CD4-positive, alpha-beta T cell (primary cell): ENCODE measurements at regions of chr6 and their contacts with region 1.

Region 1: DNA sequence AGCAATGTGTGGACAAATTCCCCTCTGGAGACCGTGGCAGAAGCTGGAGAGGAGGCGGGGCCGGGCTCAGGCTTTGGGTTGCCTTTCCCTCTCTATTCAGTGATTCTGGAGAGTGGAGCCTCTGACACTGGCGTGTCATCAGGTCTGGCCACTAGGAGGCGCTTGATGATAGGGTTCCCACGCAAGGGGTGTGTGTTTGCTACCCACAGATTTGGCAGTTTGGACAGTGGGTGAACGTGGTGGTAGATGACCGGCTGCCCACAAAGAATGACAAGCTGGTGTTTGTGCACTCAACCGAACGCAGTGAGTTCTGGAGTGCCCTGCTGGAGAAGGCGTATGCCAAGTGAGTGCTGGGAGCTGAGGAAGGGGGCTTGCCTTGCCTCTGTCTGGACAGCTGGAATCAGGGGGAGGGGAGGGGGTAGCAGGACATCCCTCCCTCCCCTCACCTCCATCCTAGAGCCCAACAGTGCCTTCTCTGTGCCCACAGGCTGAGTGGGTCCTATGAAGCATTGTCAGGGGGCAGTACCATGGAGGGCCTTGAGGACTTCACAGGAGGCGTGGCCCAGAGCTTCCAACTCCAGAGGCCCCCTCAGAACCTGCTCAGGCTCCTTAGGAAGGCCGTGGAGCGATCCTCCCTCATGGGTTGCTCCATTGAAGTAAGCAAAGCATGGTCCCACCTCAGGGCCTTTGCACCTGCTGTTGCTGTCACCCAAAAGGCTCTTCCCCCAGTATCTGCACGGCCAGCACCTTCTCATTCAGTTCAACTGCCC is 14.3 kb downstream of the CAPN11 start:
- DNase-seq: peak; percentile 62 to 84 (median 72)
- ATAC-seq: peak; percentile 89
- H3K4me3 ChIP-seq: no peak overlapping the region
- H3K4me3 Mint-ChIP-seq: peak overlapping the region; percentile 23
- H3K27ac ChIP-seq: no peak overlapping the region
- H3K27ac Mint-ChIP-seq: no peak overlapping the region
- H3K4me1 ChIP-seq: peaks cover 13% of the 10 kb centered on the region
- H3K4me1 Mint-ChIP-seq: peaks cover 18% of the 10 kb centered on the region
- H3K27me3 ChIP-seq: peaks cover 5 to 16% of the 10 kb centered on the region in 2 experiments
- H3K27me3 Mint-ChIP-seq: no peaks in the 10 kb centered on the region
- CTCF ChIP-seq: peak; percentile 90

Region 2: DNA sequence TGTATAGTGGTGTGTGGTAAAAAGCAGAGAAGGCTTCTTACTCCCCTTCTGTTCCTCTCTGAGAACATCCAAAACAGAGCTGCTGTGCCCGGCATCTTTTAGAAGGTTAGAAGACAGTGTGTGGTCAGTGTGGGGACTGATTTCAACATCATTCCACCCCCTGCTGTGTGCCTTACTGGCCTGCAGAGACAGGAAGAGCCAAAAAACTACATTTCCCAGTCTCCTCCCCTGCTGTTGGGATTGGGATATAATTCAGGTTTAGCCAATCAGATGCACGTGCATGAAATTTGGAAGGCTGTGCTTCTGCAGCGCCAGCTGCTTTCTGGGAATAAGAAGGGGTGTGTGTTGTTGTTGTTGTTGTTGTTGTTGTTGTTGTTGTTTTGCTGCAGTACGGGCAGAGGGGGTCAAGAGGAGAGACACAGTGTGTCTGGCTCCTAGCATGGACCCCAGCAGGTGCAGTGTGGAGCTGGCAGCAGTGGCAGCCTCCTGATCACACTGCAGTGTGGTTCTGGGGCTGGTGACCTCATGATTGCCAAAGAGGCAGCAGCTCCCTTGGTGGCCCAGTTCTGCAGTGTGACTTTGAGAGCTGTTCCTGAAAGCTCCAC is 120.4 kb before region 1 on chr6:
- CTCF ChIA-PET with region 1: no interaction called
- POLR2A ChIA-PET with region 1: no interaction called
- intact Hi-C with region 1: no loop called
- DNase-seq: peak in 1 of 14 experiments; percentile 31
- ATAC-seq: no peak
- H3K4me3 ChIP-seq: no peak overlapping the region
- H3K4me3 Mint-ChIP-seq: no peak overlapping the region
- H3K27ac ChIP-seq: no peak overlapping the region
- H3K27ac Mint-ChIP-seq: no peak overlapping the region
- H3K4me1 ChIP-seq: peaks cover 4% of the 10 kb centered on the region
- H3K4me1 Mint-ChIP-seq: no peaks in the 10 kb centered on the region
- H3K27me3 ChIP-seq: peaks cover 0 to 2% of the 10 kb centered on the region in 2 experiments
- H3K27me3 Mint-ChIP-seq: peaks cover 2% of the 10 kb centered on the region
- CTCF ChIP-seq: no peak

Region 3: DNA sequence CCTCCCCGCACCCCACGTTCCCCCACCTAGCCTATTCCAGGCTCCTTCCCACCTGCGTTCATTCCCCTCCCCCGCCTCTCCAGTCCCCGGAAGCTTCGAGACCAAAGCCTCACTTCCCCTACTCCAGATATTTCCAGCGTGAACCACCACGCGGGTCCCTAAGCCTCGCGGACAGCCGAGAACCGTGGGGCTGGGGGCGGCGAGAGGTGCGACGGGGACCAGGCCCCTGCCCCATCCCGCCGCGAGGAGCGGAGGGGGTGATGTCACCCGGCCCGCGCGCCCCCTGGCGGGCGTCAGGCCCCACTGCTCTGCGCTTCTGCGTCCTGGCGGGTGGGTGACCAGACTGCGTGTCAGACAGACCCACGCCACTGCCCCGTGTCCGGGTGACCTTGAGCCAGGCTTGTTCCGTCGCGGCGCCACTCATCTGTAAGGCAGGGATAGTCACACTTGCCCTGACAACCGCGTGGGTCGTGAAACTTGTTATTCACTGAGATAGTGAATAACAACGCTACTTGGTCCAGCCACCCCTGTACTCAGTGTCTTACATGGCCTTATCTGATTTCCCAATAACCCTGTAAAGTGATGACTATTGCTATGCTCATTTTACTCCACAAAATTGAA is 65.0 kb after region 1 on chr6:
- CTCF ChIA-PET with region 1: no interaction called
- POLR2A ChIA-PET with region 1: interaction called, 3 read pairs
- intact Hi-C with region 1: loop called (anchors 1 kb)
- DNase-seq: peak; percentile 61 to 90 (median 74)
- ATAC-seq: peak; percentile 89
- H3K4me3 ChIP-seq: peak overlapping the region; percentile 64
- H3K4me3 Mint-ChIP-seq: peak overlapping the region; percentile 90
- H3K27ac ChIP-seq: peak overlapping the region; percentile 74 to 80
- H3K27ac Mint-ChIP-seq: peak overlapping the region; percentile 86
- H3K4me1 ChIP-seq: peaks cover 18% of the 10 kb centered on the region
- H3K4me1 Mint-ChIP-seq: peaks cover 8% of the 10 kb centered on the region
- H3K27me3 ChIP-seq: no peaks in the 10 kb centered on the region
- H3K27me3 Mint-ChIP-seq: no peaks in the 10 kb centered on the region
- CTCF ChIP-seq: peak; percentile 99

Region 4: DNA sequence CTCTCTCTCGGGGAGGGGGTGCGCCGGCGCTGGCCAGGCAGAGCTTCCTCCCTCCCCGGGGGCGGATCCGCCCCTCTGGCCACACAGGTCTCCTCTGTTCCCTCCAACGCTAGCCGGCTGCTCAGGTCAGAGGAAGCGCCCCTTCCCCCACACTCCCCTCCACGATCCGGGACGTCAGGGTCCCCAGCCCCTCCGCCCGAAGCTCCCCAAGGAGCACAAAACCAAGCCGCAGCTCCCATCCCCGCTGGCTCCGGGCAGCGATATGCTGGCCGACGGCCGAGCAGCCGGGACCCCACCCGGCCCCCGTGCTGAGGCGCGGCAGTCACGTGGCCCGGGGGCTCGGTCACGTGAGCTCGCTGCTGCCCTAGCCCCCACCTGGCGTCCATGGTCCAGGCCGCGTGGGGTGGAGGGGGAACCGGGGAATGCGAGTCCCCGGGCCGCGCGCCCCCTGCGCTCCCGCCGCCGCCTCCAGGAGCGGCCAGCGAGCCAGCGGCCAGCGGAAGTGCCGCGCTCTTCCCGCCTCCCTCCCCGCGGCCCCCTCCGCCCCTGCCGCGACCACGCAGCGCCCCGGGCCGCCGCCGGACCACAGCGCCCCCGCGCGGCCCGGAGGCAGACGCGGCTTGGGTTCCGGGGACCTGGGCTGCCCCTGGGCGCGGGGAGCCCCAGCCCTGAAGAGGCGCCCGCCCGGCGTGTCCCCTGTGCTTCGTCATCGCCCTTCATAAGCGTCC is 84.3 kb after region 1 on chr6 and contains the start of gene SLC35B2:
- CTCF ChIA-PET with region 1: no interaction called
- POLR2A ChIA-PET with region 1: no interaction called
- intact Hi-C with region 1: loop called in 1 of 2 experiments (anchors 5 kb)
- DNase-seq: peak in 13 of 14 experiments; percentile 33 to 89 (median 56)
- ATAC-seq: peak; percentile 84
- H3K4me3 ChIP-seq: peak within 1 kb of the TSS; percentile 95
- H3K4me3 Mint-ChIP-seq: peak within 1 kb of the TSS; percentile 90
- H3K27ac ChIP-seq: peak within 1 kb of the TSS; percentile 63 to 76
- H3K27ac Mint-ChIP-seq: peak within 1 kb of the TSS; percentile 78
- H3K4me1 ChIP-seq: peaks cover 52% of the 10 kb centered on the region
- H3K4me1 Mint-ChIP-seq: peaks cover 57% of the 10 kb centered on the region
- H3K27me3 ChIP-seq: no peaks in the 10 kb centered on the region
- H3K27me3 Mint-ChIP-seq: no peaks in the 10 kb centered on the region
- CTCF ChIP-seq: peak; percentile 29
- total RNA-seq, gene SLC35B2: 6.4 to 7.0 TPM

Region 5: DNA sequence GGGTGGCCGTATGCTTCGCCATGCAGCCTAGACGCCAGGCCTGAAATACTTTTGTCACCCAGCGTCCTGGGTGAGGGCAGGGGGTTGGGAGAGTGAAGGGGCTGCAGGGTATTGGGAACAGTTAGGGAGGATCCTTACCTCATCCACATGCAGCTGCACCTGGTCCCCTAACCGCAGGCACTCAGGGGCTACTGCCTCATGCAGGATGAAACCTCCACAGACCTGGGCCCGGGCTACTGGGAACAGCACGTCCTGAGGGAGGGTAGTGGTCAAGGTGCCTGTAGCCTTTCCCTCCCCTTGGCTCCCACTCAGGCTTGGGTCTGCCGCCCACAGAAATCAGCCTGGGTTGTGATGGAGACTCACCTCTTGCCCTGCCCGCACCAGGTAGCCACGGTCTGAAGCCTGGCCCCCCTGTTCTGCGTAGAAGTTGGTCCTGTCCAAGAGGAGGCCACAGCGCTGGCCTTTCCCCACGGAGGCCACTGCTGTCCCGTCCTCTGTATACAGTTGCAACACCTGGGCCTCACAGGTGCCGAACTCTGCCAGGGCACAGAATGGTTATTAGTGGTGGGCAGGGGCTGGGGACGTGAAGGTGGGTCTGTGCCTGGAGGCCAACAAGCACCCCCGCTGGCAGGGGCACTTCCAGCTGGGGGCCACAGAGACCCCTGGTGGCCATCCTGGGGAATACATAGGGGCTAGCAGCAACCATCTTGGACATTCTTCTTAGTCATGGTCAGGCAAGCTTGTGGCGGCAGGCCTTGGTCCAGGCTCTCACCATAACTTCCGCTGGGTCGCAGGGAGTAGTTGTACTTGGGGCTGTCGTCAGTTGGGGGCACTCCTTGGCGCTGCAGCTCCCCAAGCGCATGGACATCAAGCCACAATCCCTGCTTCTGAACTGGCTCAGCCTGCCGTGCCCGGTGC is 131.6 kb after region 1 on chr6:
- CTCF ChIA-PET with region 1: no interaction called
- POLR2A ChIA-PET with region 1: no interaction called
- intact Hi-C with region 1: loop called (anchors 1 kb)
- DNase-seq: peak; percentile 18 to 68 (median 36)
- ATAC-seq: peak; percentile 80
- H3K4me3 ChIP-seq: no peak overlapping the region
- H3K4me3 Mint-ChIP-seq: no peak overlapping the region
- H3K27ac ChIP-seq: no peak overlapping the region
- H3K27ac Mint-ChIP-seq: no peak overlapping the region
- H3K4me1 ChIP-seq: no peaks in the 10 kb centered on the region
- H3K4me1 Mint-ChIP-seq: peaks cover under 1% of the 10 kb centered on the region
- H3K27me3 ChIP-seq: no peaks in the 10 kb centered on the region
- H3K27me3 Mint-ChIP-seq: no peaks in the 10 kb centered on the region
- CTCF ChIP-seq: peak; percentile 80

Region 6: GRCh38 chr6:44338228-44339122 is 165.6 kb after region 1 on chr6:
- CTCF ChIA-PET with region 1: interaction called, 3 read pairs
- POLR2A ChIA-PET with region 1: no interaction called
- intact Hi-C with region 1: loop called (anchors 1 to 2 kb)
- DNase-seq: peak; percentile 36 to 81 (median 55)
- ATAC-seq: peak; percentile 91
- H3K4me3 ChIP-seq: no peak overlapping the region
- H3K4me3 Mint-ChIP-seq: no peak overlapping the region
- H3K27ac ChIP-seq: no peak overlapping the region
- H3K27ac Mint-ChIP-seq: no peak overlapping the region
- H3K4me1 ChIP-seq: peaks cover 8% of the 10 kb centered on the region
- H3K4me1 Mint-ChIP-seq: no peaks in the 10 kb centered on the region
- H3K27me3 ChIP-seq: peaks cover 21 to 26% of the 10 kb centered on the region in 2 experiments
- H3K27me3 Mint-ChIP-seq: peaks cover 33% of the 10 kb centered on the region
- CTCF ChIP-seq: peak; percentile 69

Region 7: DNA sequence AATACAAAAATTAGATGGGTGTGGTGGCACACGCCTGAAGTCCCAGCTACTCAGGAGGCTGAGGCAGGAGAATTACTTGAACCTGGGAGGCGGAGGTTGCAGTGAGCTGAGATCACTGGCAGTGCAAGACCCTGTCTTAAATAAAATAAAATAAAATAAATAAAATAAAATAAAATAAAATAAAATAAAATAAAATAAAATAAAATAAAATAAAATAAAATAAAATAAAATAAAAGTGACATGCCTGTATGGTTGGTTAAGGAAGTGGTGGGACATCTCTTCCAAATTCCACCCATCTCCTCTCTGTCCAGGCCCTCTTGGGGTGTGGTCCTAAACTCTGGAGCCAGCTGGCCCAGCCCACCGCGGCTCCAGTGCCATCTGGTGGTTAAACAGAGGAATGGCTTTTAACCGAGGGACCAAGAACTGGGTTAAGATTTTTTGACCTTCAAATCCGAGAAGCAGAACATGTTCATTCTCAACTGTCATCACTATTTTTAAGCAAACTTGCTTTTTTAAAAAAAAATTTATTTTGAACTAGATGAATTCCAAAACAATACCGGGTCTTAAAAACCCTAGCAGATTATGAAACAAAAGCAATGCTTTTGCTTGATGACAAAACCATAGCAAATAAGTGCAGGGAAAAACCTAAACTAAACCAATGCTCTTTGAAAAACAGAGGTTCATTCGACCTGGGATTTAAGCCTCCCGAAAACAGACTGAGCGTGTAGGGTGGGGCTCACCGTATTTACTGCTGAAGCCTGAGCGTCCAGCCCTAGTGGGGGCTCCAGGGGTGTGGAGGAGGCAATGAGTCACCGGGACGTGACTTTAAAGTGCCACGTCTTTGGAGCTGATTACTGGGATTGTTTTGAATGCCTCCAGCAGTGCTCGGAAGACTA is 283.4 kb after region 1 on chr6:
- CTCF ChIA-PET with region 1: no interaction called
- POLR2A ChIA-PET with region 1: no interaction called
- intact Hi-C with region 1: loop called in 1 of 2 experiments (anchors 5 kb)
- DNase-seq: peak in 11 of 14 experiments; percentile 6 to 72 (median 24)
- ATAC-seq: peak; percentile 75
- H3K4me3 ChIP-seq: no peak overlapping the region
- H3K4me3 Mint-ChIP-seq: no peak overlapping the region
- H3K27ac ChIP-seq: no peak overlapping the region
- H3K27ac Mint-ChIP-seq: no peak overlapping the region
- H3K4me1 ChIP-seq: no peaks in the 10 kb centered on the region
- H3K4me1 Mint-ChIP-seq: no peaks in the 10 kb centered on the region
- H3K27me3 ChIP-seq: peaks cover 0 to 2% of the 10 kb centered on the region in 2 experiments
- H3K27me3 Mint-ChIP-seq: no peaks in the 10 kb centered on the region
- CTCF ChIP-seq: peak; percentile 76

Region 8: GRCh38 chr6:44524476-44525227 is 351.7 kb after region 1 on chr6:
- CTCF ChIA-PET with region 1: no interaction called
- POLR2A ChIA-PET with region 1: no interaction called
- intact Hi-C with region 1: no loop called
- DNase-seq: no peak
- ATAC-seq: no peak
- H3K4me3 ChIP-seq: no peak overlapping the region
- H3K4me3 Mint-ChIP-seq: no peak overlapping the region
- H3K27ac ChIP-seq: no peak overlapping the region
- H3K27ac Mint-ChIP-seq: no peak overlapping the region
- H3K4me1 ChIP-seq: peaks cover 4% of the 10 kb centered on the region
- H3K4me1 Mint-ChIP-seq: no peaks in the 10 kb centered on the region
- H3K27me3 ChIP-seq: no peaks in the 10 kb centered on the region
- H3K27me3 Mint-ChIP-seq: peaks cover 26% of the 10 kb centered on the region
- CTCF ChIP-seq: no peak